Psoas muscle (tissue), 8 donors: ENCODE measurements at regions of chr9 and their contacts with region 1.

Region 1: GRCh38 chr9:132288361-132288760 is 66.4 kb downstream of the SETX start:
- DNase-seq: no peak
- ATAC-seq: no peak
- H3K4me3 ChIP-seq: no peak overlapping the region
- H3K27ac ChIP-seq: peak overlapping the region; percentile 33
- H3K4me1 ChIP-seq: peaks cover 10% of the 10 kb centered on the region
- H3K27me3 ChIP-seq: no peaks in the 10 kb centered on the region
- CTCF ChIP-seq: no peak

Region 2: DNA sequence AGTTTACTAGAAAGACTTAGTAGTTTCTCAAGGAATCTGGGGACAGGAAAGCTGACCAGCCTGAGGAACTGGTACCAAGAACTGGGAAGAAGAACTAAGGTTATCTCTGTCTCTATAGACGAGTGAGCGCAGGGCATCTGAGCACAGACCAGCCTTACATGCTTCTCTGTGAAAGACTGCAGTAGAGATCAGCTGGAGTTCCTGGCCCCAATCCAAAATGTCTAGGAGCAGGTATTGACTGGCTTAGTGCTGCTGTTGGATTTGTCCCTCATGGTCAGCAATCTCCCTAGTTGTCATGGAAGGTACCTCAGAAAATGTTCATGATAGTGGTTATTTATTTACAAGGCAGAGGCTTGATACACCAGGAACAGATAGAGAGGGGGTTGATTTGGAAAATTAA is 1149.7 kb before region 1 on chr9:
- intact Hi-C with region 1: loop called (anchors 10 kb)
- DNase-seq: no peak
- ATAC-seq: no peak
- H3K4me3 ChIP-seq: no peak overlapping the region
- H3K27ac ChIP-seq: no peak overlapping the region
- H3K4me1 ChIP-seq: no peaks in the 10 kb centered on the region
- H3K27me3 ChIP-seq: no peaks in the 10 kb centered on the region
- CTCF ChIP-seq: no peak

Region 3: DNA sequence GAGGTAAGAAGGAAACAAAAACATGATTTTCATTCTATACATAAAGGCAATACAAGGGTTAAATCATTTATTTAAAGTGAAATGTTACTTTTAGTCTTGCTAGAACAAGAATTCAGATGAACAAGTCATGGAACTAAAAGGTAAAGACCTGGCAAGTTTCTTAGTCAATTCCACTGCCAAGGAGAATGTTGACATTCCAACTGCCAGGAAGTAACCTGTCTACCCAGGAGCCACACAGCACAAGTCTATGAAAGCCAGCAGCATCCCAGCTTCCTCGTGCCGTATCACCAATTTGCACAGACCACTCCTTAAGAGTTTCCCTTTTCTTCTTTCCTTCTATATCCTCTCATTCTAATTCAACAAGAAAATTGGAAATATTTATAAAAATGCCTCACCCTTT is 13.5 kb before region 1 on chr9:
- intact Hi-C with region 1: no loop called
- DNase-seq: no peak
- ATAC-seq: no peak
- H3K4me3 ChIP-seq: no peak overlapping the region
- H3K27ac ChIP-seq: no peak overlapping the region
- H3K4me1 ChIP-seq: no peaks in the 10 kb centered on the region
- H3K27me3 ChIP-seq: no peaks in the 10 kb centered on the region
- CTCF ChIP-seq: no peak

Region 4: GRCh38 chr9:132327537-132327936 is 39.2 kb after region 1 on chr9:
- intact Hi-C with region 1: loop called in 1 of 2 experiments (anchors 5 kb)
- DNase-seq: no peak
- ATAC-seq: peak; percentile 78 to 94 (median 88)
- H3K4me3 ChIP-seq: no peak overlapping the region
- H3K27ac ChIP-seq: peak overlapping the region; percentile 75
- H3K4me1 ChIP-seq: peaks cover 19% of the 10 kb centered on the region
- H3K27me3 ChIP-seq: no peaks in the 10 kb centered on the region
- CTCF ChIP-seq: no peak